Activated naive CD8-positive, alpha-beta T cell treated with anti-CD3 and anti-CD28 coated beads, Interleukin-2, amount 10 ng/mL, durations not matched to agents 7 days and 5 days (primary cell): ENCODE measurements at regions of chr2 and their contacts with region 1.

Region 1: GRCh38 chr2:157433394-157433793 is 10.5 kb downstream of the CYTIP start:
- DNase-seq: no peak
- ATAC-seq: peak; percentile 11
- H3K4me3 Mint-ChIP-seq: peak overlapping the region; percentile 81
- H3K27ac Mint-ChIP-seq: peak overlapping the region; percentile 90
- H3K4me1 Mint-ChIP-seq: peaks cover 75% of the 10 kb centered on the region
- H3K27me3 Mint-ChIP-seq: no peaks in the 10 kb centered on the region

Region 2: DNA sequence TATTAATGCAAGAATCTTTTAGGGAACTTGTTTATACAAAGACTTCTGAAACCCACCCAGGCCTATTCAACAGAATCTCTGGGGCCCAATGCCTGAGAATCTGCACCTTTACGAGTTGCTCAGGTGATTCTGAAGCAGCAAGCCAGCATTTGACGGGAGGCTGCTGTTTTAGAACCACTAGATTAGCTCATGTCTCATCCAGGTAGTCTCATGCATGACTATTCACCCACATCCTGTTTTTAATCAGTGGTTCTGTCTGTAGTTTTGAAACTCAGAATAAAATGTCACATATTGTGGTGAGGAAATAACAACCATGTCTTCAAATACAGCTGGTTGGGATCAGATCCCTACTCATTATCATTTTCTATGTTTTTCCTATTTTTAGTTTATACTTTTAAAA is 29.0 kb before region 1 on chr2:
- POLR2A ChIA-PET with region 1: interaction called, 15 read pairs
- DNase-seq: peak; percentile 34
- ATAC-seq: peak; percentile 96
- H3K4me3 Mint-ChIP-seq: peak overlapping the region; percentile 52
- H3K27ac Mint-ChIP-seq: peak overlapping the region; percentile 90
- H3K4me1 Mint-ChIP-seq: peaks cover 53% of the 10 kb centered on the region
- H3K27me3 Mint-ChIP-seq: no peaks in the 10 kb centered on the region

Region 3: DNA sequence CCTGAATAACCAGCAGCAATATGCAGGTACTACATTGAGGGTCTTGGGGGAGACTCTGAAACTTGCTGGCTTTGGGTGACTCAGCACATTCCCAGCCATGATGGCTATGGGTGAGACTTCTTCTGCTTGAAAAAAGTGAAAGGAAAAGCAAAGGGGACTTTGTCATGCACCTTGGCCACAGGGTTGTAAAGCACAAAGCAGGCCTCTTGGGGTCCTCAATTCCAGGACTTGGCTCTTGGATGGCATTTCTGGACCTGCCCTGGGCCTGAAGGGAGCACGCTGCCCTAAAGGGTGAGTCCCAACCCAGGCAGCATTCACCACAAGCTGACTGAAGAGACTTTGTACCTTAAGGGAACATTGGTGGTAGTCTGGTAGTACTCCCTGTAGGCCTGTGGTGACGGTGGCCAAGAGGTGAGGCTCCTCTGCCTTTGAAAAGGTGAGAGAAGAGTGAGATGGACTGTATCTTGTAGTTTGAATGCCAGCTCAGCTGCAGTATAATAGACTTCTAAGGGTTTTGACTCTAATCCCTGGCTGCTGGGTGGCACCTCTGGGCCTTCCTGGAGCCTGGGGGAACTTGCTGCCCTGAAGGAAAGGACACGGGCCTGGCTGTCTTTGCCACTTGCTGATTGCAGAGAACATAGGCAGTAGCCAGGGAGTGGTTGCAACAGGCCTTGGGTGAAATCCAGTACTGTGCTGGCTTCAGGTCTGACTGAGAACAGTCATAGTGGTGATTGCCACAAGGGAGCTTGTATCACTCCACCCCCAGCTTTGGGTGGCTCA is 47.0 kb after region 1 on chr2:
- POLR2A ChIA-PET with region 1: interaction called, 54 read pairs
- DNase-seq: peak; percentile 53
- ATAC-seq: peak; percentile 46
- H3K4me3 Mint-ChIP-seq: peak overlapping the region; percentile 84
- H3K27ac Mint-ChIP-seq: peak overlapping the region; percentile 97
- H3K4me1 Mint-ChIP-seq: peaks cover 65% of the 10 kb centered on the region
- H3K27me3 Mint-ChIP-seq: no peaks in the 10 kb centered on the region